Tibial artery (tissue), 4 donors: ENCODE measurements at regions of chr2 and their contacts with region 1.

Region 1: DNA sequence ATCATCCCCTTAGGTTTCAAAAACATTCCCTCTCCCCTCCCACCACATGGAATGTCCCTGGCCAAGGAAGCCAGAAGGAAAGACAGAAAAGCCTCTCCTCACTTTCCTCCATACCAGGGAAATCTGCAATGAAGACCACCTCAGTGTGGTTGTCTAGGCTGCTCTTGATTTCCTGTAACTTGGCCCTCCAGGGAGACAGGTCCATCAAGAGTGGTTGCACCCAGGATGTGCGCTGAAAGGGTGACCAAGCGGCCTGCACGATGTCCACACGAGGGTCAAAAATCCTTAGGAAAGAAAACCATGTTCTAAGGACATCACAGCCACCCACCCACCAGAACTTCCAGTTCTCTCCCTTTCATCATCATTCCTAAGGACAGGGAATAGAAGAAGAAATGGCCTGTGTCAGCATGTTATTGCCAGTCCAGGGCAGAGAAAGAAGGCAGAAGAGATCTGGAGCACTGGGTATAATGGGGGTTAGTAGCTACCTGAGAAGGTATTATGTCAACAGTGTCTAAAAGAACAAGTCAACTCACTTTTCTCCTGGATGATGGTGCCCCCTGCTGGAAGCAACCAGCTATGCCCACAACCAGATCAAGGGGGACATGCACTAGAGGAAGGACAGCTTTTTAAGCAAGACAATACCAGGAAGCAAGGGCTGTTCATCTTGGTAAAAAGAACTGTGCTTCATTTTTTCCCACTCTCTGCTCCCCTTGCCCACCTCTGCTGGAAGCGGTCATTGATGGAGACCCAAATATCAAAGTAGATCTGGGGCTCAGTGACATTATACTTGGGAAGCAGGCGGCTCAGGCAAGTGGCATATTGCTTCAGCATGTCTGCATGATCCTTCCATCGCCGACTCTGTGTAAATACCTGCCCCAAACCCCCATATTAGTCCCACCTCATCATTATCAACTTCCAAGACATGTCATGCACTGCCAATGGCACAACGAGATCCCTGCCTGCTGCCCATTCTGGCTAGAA is 9.3 kb downstream of the GGCX start:
- DNase-seq: peak; percentile 87 to 88
- H3K4me3 ChIP-seq: no peak overlapping the region
- H3K27ac ChIP-seq: peak overlapping the region in 1 of 2 donors; percentile 23
- H3K4me1 ChIP-seq: no peaks in the 10 kb centered on the region
- H3K27me3 ChIP-seq: no peaks in the 10 kb centered on the region
- CTCF ChIP-seq: peak; percentile 86 to 95

Region 2: GRCh38 chr2:85420536-85421259 is 131.3 kb before region 1 on chr2:
- intact Hi-C with region 1: loop called (anchors 2 kb)
- DNase-seq: peak; percentile 82 to 91
- H3K4me3 ChIP-seq: peak overlapping the region in 1 of 2 donors; percentile 35
- H3K27ac ChIP-seq: peak overlapping the region; percentile 91 to 99
- H3K4me1 ChIP-seq: peaks cover 0 to 33% (median 27%) of the 10 kb centered on the region in 4 donors
- H3K27me3 ChIP-seq: no peaks in the 10 kb centered on the region
- CTCF ChIP-seq: peak; percentile 99 to 100

Region 3: DNA sequence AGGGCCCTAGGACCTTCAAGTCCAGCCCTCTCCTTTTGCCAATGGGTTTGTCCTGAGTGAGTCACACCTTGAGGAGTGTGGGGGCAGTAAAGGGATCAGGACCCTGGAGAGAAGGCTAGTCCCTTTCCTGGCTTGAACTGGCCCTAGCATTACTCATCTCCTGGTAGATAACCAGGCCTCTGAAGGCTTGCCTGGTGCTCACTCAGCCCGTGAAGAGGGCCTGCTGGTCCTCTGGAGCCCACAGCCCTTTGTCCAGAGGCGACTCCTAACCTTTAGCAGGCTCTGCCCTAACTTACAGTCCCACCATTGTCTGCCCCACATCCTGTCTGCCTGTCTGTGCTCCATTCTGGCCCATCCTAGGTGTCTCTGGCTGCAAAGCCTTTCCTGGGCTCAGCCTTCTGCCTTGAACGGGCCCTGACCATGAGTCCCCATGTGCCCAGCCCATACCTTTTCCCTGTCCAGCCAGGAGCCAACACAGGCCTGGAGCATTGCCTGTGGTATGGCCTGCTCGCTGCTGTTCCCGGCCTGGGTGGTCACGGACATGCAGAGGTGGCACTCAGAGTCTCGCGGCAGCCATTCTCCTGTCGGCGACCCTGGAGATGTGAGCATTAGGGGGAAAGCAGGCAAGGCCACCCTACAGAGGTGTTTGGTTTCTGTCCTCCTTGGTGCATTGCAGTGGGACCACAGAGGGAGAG is 111.1 kb after region 1 on chr2:
- intact Hi-C with region 1: no loop called
- DNase-seq: peak; percentile 73 to 79
- H3K4me3 ChIP-seq: no peak overlapping the region
- H3K27ac ChIP-seq: no peak overlapping the region
- H3K4me1 ChIP-seq: peaks cover 0 to 17% (median 7%) of the 10 kb centered on the region in 4 donors
- H3K27me3 ChIP-seq: no peaks in the 10 kb centered on the region
- CTCF ChIP-seq: no peak

Region 4: DNA sequence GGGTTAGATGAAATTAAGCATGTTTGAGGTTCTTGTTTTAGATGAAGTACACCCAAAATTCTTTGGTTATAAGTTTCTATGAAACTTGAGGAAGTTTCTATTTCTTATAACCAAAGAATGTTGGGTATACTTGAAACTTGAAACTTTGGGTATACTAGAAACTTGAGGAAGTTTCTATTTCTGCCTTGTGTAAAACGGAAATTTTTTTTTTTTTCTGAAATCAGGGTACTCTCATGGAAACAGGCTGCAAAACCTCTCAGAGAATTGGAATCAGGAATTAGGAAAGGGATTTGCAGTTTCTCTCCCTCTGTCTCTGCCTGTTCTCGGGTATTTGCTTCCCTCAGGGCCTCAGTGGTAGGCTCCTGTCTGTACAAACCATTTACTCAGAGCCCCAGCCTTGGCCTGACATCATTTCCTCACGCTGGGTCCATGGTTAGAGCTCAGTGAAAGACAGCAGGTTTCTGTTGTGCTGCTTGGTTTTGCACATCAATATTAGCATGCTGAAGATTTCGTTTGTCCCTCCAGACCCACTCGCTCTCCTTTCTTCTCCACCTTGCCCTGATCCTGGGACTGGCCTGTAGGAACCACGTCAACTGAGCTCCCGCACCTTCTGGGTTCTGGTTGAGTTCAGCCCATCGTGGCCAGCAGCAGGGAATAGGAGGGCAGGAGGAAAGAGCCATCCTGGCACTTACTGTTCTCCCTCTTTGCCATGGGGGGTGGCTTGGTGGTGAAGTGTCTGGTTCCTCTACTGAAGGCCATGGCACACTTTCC is 447.3 kb after region 1 on chr2:
- intact Hi-C with region 1: no loop called
- DNase-seq: peak in 1 of 2 donors; percentile 65
- H3K4me3 ChIP-seq: peak overlapping the region; percentile 14 to 34
- H3K27ac ChIP-seq: peak overlapping the region; percentile 83 to 87
- H3K4me1 ChIP-seq: peaks cover 0 to 56% (median 48%) of the 10 kb centered on the region in 4 donors
- H3K27me3 ChIP-seq: no peaks in the 10 kb centered on the region
- CTCF ChIP-seq: no peak